ENCODE measurements at regions of chr13 and their contacts with region 1.

Region 1: DNA sequence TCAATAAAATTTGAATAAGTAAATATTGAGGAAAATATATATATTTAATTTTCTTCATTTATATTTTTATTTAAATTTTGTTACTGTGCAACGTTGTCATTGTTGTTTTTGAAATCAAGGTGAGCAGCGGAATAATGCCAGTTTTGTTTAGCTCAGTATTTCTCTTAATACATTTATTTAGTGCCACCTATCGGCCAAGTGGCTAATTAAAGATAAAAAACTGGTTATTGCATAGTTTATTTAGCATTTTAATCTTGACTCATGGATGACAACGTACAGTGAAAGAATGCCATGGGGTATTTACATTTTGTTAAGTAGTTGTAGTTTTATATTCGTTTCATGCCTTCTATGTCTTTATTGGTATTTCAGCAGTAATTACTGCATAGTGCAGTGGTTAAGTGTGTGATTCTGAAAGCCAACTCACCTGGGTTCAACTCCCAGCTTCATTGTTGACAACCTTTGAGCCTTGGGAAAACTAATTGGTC is 265.9 kb downstream of the MYO16 start:
- DNase-seq: no peak
- ATAC-seq: no peak
- H3K4me3 ChIP-seq: no peak overlapping the region
- H3K27ac ChIP-seq: no peak overlapping the region
- H3K4me1 ChIP-seq: no peaks in the 10 kb centered on the region
- H3K27me3 ChIP-seq: no peaks in the 10 kb centered on the region
- CTCF ChIP-seq: peak; percentile 57

Region 2: DNA sequence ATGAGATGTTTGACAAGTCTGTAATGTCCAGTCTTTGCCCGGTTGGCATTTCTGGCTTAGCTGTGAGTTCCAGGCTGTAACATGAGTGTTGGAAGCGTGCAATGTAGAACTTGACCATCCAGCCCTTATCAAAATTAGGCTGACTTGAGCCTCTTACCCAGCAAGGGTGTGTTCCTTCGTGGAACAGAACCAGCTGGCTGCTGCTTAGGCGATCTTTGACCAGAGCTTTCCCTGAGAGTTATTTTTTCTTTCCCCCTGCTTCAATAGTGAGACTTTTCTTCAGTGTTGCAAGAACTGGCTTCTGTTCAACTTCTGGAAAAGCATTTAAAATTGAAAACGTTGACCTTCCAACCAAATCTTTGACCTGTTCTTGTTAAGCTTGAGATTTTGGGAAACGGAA is 619.2 kb before region 1 on chr13:
- intact Hi-C with region 1: no loop called
- DNase-seq: peak; percentile 33 to 71
- ATAC-seq: peak; percentile 37 to 56 (median 40)
- H3K4me3 ChIP-seq: no peak overlapping the region
- H3K27ac ChIP-seq: no peak overlapping the region
- H3K4me1 ChIP-seq: peaks cover 10% of the 10 kb centered on the region
- H3K27me3 ChIP-seq: no peaks in the 10 kb centered on the region
- CTCF ChIP-seq: no peak

Region 3: DNA sequence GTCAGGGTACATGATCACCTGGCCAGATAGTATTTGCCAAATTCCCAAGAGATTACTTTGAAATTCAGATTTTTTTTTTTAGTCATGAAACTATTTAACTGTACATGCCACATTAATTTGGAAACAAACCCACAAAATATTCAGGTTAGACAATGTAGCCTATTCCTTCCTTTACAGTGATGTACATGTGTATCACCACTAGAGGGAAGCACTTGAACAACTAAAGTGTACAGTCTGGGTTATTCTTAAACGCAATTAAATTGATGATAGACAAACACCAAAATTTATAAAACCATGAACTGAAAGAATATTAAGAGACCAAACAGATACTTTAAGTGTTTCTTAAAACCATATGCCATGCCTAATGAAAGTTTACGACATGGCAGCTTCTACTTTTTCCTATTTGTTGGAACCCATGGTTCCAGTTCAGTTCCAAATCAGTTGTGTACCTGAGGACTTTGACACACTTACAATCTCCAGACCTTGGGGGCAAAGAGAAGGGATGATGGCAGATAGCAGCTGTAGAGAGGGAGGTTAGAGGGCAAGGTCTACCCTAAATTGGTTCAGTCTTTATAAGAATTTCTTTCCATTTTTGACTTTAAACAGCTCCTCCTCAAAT is 572.9 kb before region 1 on chr13:
- intact Hi-C with region 1: loop called (anchors 5 kb)
- DNase-seq: no peak
- ATAC-seq: peak in 2 of 4 donors; percentile 53 to 65
- H3K4me3 ChIP-seq: no peak overlapping the region
- H3K27ac ChIP-seq: no peak overlapping the region
- H3K4me1 ChIP-seq: no peaks in the 10 kb centered on the region
- H3K27me3 ChIP-seq: no peaks in the 10 kb centered on the region
- CTCF ChIP-seq: peak; percentile 73

Region 4: GRCh38 chr13:108332791-108333190 is 562.5 kb before region 1 on chr13:
- intact Hi-C with region 1: loop called in 1 of 2 experiments (anchors 5 kb)
- DNase-seq: no peak
- ATAC-seq: no peak
- H3K4me3 ChIP-seq: no peak overlapping the region
- H3K27ac ChIP-seq: no peak overlapping the region
- H3K4me1 ChIP-seq: no peaks in the 10 kb centered on the region
- H3K27me3 ChIP-seq: peaks cover 0 to 2% (median 0%) of the 10 kb centered on the region in 3 donors
- CTCF ChIP-seq: no peak

Region 5: GRCh38 chr13:108609353-108609752 is 285.9 kb before region 1 on chr13:
- intact Hi-C with region 1: loop called in 1 of 2 experiments (anchors 5 kb)
- DNase-seq: no peak
- ATAC-seq: no peak
- H3K4me3 ChIP-seq: no peak overlapping the region
- H3K27ac ChIP-seq: no peak overlapping the region
- H3K4me1 ChIP-seq: no peaks in the 10 kb centered on the region
- H3K27me3 ChIP-seq: no peaks in the 10 kb centered on the region
- CTCF ChIP-seq: peak; percentile 38

Measured in psoas muscle (tissue), 8 donors.